ENCODE measurements at regions of chr20 and their contacts with region 1.

Region 1: DNA sequence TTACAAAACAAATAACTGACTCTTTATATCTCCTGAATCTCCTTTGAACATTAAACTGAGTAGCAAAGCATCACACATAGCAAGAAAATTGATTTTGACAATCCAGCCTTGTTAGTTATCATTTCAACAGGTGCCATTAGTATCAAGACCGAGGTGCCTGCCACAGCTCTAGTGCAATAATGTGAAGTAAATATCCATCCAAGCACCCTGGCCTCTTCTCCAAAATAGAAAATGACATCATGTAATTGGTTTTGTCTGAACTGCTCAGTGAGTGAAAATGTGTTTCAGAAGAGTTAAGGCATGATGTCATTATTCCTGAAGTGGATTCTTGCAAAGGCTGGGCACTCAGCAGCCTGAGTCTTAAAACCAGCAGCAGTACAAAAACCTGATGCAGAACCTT is 341.4 kb downstream of the PLCB1 start:
- DNase-seq: peak in 1 of 2 donors; percentile 4
- ATAC-seq: peak in 6 of 8 donors; percentile 46 to 92 (median 74)
- H3K4me3 ChIP-seq: no peak overlapping the region
- H3K27ac ChIP-seq: no peak overlapping the region
- H3K4me1 ChIP-seq: peaks cover 0 to 16% (median 0%) of the 10 kb centered on the region in 9 donors
- H3K27me3 ChIP-seq: no peaks in the 10 kb centered on the region
- CTCF ChIP-seq: no peak

Region 2: GRCh38 chr20:8431538-8432434 is 41.7 kb before region 1 on chr20:
- intact Hi-C with region 1: loop called in 1 of 10 experiments (anchors 5 kb)
- DNase-seq: peak; percentile 73 to 80
- ATAC-seq: peak; percentile 81 to 91 (median 86)
- H3K4me3 ChIP-seq: peak overlapping the region in 6 of 10 donors; percentile 6 to 25 (median 13)
- H3K27ac ChIP-seq: peak overlapping the region in 9 of 10 donors; percentile 42 to 85 (median 70)
- H3K4me1 ChIP-seq: peaks cover 2 to 89% (median 38%) of the 10 kb centered on the region in 9 donors
- H3K27me3 ChIP-seq: no peaks in the 10 kb centered on the region
- CTCF ChIP-seq: no peak

Region 3: DNA sequence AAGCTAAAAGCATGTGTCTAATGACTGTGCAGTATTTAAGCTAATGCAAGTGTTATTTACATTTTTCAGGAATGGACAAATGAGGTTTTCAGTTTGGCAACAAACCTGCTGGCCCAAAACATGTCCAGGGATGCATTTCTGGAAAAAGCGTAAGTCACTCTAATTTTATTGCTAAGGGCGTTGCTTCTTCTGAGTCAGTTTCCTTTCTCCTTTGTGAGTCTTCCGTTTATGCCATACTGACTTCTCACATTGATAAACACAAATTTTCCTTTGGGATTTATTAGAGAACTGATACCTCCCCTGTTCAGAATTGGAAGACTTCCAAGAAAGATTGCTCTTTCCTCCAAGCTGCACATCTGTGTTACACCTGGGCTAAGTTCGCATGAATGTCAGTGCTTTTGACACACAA is 172.6 kb after region 1 on chr20:
- intact Hi-C with region 1: no loop called
- DNase-seq: peak in 1 of 2 donors; percentile 15
- ATAC-seq: peak in 7 of 8 donors; percentile 20 to 74 (median 60)
- H3K4me3 ChIP-seq: no peak overlapping the region
- H3K27ac ChIP-seq: peak overlapping the region in 8 of 10 donors; percentile 1 to 76 (median 64)
- H3K4me1 ChIP-seq: peaks cover 0 to 40% (median 29%) of the 10 kb centered on the region in 9 donors
- H3K27me3 ChIP-seq: no peaks in the 10 kb centered on the region
- CTCF ChIP-seq: no peak

Measured in heart right ventricle (tissue), 16 donors.